Activated CD8-positive, alpha-beta memory T cell treated with anti-CD3 and anti-CD28 coated beads, Interleukin-2, amount 10 ng/mL, durations not matched to agents 7 days and 5 days (primary cell): ENCODE measurements at regions of chr14 and their contacts with region 1.

Region 1: DNA sequence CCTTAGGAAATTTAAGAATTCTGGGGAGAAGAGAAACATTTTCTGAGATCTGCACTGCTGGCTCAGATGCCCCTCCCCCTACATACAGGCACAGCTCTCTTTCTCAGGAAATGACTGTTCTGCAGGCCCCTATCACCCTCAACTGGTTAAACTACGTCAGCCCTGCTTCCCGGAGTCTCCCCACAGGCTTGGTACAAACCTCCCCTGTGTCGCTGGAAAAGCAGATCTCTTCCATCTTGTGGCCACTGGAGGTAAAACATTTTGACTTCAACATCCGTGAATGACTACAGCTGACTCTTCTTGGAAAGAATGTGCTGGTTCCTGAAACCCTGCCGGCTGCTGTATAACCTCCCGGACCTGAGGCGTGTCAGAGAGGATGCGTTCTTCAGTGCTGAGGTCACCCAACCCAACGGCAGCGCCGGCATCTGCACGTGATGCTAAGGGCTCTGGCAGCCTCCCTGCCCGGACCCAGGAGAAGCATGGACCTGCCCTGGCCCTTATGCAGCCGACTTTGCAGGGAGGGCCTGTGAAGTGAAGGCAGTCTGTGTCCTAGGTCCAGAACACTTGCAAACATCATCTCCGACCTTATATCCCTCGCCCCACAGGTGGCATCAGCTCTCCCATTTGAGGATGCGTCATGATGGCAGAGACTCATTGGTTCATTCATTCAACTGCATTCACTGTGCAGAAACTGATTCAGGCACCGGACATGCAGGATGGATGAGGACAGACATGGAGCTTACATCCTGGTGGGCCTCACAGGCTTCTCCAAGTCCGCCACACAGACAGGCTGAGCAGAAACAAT is 129.3 kb downstream of the GCH1 start:
- DNase-seq: peak; percentile 93
- ATAC-seq: peak; percentile 83
- H3K4me3 Mint-ChIP-seq: peak overlapping the region; percentile 43
- H3K27ac Mint-ChIP-seq: peak overlapping the region; percentile 84
- H3K4me1 Mint-ChIP-seq: peaks cover 47% of the 10 kb centered on the region
- H3K27me3 Mint-ChIP-seq: peaks cover 58% of the 10 kb centered on the region

Region 2: DNA sequence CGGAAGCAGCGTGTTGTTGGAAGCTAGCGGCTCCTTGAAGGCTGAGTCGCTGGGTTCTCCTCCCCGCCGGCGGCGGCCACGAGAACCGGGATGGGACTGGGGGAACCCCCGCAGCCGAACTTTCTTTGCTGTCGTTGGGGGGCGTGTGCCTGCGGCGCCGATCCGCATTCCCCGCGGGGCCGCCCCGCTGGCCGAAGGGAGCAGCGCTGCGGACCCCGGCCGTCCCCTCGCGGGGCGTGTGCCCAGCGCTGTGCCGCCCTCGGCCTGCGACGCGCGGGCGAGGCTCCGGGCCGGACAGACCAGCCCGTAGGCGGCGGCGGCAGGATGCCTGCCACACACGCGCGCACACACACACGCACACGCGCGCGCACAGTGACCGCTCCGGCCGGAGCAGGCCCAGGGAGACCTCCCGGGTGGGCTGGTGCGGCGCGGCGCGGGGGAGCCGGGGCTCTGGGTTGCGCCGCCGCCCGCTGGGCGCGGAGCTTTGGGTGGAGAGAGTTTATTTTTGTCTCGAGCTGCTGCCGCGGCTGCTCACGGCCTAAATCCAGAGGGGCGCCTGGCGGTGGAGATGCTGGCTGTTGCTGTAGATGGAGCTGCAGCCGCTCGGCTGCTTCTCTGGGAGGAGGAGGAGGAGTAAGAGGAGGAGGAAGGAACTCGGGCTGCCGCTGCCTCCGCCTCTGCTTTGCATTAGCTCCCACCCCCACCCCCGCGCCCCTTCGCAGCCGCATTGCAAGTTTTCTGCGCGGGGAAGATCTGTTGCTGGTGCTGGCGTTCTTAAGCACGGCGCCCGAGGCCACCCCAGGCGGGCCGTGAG is 206.8 kb before region 1 on chr14 and contains the start of gene SAMD4A:
- CTCF ChIA-PET with region 1: interaction called, 246 read pairs
- DNase-seq: peak; percentile 67
- ATAC-seq: peak; percentile 38
- H3K4me3 Mint-ChIP-seq: peak within 1 kb of the TSS; percentile 79
- H3K27ac Mint-ChIP-seq: peak within 1 kb of the TSS; percentile 32
- H3K4me1 Mint-ChIP-seq: peaks cover 19% of the 10 kb centered on the region
- H3K27me3 Mint-ChIP-seq: peaks cover 46% of the 10 kb centered on the region
- total RNA-seq, gene SAMD4A: 1.6 to 1.7 TPM

Region 3: DNA sequence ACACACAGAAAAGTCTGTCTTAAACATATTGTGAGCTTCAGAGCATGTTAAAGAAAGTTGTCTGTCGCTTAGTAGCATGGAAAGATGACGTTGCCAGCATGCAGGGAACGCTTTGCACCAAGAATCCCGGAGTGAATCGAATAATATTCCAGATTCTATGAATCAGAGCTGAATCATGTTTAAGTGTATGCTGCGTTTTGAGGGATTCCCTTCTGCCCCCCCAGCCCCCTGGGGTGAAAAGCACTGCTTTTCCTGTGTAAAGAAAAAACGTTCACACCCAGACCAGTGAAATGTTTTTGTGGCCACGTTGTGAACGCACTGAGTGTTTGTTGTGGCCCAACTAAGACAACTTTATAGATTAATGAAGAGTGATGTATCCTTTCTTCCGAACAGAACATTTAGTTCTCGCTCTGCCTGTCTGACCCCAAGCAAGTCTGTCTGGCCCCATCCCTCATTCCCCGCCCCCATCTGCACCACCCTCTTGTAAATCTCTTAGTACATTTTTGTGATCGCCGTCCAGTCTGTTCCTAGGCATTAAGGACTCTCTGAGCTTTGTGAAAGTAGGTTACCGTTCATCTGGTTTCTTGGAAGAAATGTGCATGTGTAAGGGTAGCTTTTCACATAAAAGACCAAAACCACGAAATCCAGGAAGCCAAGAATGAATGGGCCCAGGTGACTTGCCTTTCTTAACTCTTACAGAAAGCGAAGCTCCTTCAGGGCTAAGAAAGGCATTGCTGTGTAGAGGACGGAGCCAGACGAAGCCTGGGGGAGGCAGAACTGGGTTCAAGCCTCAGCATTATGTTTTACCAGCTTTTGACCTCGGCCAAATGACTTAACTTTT is 103.4 kb before region 1 on chr14:
- CTCF ChIA-PET with region 1: interaction called, 19 read pairs
- DNase-seq: peak; percentile 56
- ATAC-seq: peak; percentile 85
- H3K4me3 Mint-ChIP-seq: no peak overlapping the region
- H3K27ac Mint-ChIP-seq: peak overlapping the region; percentile 6
- H3K4me1 Mint-ChIP-seq: peaks cover 39% of the 10 kb centered on the region
- H3K27me3 Mint-ChIP-seq: peaks cover 75% of the 10 kb centered on the region

Region 4: GRCh38 chr14:54691525-54692283 is 81.7 kb before region 1 on chr14:
- CTCF ChIA-PET with region 1: interaction called, 17 read pairs
- DNase-seq: peak; percentile 72
- ATAC-seq: peak; percentile 75
- H3K4me3 Mint-ChIP-seq: no peak overlapping the region
- H3K27ac Mint-ChIP-seq: no peak overlapping the region
- H3K4me1 Mint-ChIP-seq: peaks cover 13% of the 10 kb centered on the region
- H3K27me3 Mint-ChIP-seq: peaks cover 78% of the 10 kb centered on the region

Region 5: DNA sequence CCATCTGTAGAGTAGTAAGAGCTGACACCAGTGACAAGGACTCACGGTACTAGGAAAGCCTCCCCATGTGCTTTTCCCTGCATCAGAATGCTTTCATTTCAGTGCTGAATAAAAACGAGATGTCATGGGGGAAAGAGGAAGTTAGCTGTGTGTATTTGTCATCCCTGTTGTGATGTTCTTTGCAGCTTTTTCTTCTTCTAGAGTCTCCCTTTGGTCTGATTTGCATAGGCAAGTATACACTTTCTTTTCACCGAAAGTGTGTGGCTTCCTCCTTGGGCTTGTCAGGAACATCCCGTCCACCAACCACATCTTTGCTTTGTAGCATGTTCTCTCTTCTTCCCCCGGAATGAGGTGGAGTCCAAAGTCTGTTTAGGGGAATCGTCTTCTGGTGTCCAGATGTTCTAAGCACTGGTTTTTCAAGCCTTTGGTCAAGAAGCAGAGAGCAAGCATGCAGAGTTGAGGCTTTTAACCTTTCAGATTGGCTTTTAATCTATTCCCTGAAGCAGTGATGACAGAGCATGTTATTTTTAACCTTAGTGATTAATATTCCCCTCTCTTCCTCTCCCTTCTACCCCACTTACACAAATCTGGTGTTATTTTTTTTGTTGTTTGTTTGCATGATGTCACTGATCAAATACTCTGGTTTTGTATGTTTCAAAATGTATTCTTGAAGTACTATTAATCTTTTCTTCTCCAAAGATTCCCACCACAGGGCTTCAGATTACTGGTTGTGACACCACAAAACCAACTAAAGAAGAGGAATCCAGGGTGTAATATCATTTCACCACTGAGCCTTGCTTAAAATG is 43.0 kb before region 1 on chr14:
- CTCF ChIA-PET with region 1: interaction called, 40 read pairs
- DNase-seq: peak; percentile 67
- ATAC-seq: peak; percentile 94
- H3K4me3 Mint-ChIP-seq: peak overlapping the region; percentile 29
- H3K27ac Mint-ChIP-seq: peak overlapping the region; percentile 11
- H3K4me1 Mint-ChIP-seq: peaks cover 29% of the 10 kb centered on the region
- H3K27me3 Mint-ChIP-seq: peaks cover 63% of the 10 kb centered on the region

Region 6: DNA sequence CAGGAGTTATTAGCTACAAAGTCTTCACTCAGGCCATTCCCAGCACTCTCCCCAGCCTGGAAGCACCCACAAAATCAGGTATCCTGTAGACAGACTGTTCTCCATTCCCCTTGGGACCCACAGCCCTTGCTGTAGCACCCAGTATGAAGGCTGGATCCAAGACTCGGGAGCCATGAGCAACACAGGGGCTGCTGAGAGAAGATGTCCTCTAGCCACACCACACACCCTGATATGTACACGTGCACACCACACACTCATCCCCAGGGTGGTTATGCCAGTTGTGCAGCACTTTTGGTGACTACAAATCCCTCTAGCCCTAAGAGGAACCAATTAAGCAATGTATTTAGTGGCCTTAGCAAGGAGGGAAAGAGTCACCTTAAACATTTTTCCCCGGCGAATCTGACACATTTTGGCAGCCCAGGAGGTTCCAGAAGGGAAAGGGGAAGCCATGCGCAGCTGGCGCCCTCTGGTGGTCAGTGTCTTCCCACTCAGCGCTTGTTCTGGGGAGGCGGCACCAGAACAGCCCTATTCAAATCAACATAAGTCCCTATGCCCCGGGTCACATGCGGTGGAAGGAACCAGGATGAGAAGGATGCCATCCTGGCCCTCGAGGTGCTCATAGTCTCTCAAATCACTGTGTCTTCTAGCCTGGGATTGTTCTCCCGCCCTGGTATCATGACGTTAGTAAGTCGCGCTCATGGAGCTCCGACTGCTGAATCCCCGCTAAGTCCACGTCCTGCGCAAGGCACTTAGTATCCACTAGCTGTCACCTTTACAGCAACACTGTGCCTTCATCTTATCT is 32.3 kb after region 1 on chr14:
- CTCF ChIA-PET with region 1: interaction called, 24 read pairs
- DNase-seq: peak; percentile 78
- ATAC-seq: peak; percentile 83
- H3K4me3 Mint-ChIP-seq: no peak overlapping the region
- H3K27ac Mint-ChIP-seq: no peak overlapping the region
- H3K4me1 Mint-ChIP-seq: no peaks in the 10 kb centered on the region
- H3K27me3 Mint-ChIP-seq: peaks cover 46% of the 10 kb centered on the region

Region 7: GRCh38 chr14:55038708-55039107 is 265.3 kb after region 1 on chr14:
- CTCF ChIA-PET with region 1: no interaction called
- DNase-seq: no peak
- ATAC-seq: no peak
- H3K4me3 Mint-ChIP-seq: no peak overlapping the region
- H3K27ac Mint-ChIP-seq: no peak overlapping the region
- H3K4me1 Mint-ChIP-seq: peaks cover 1% of the 10 kb centered on the region
- H3K27me3 Mint-ChIP-seq: no peaks in the 10 kb centered on the region